Mammary epithelial cell (primary cell): ENCODE measurements at regions of chr3 and their contacts with region 1.

Region 1: DNA sequence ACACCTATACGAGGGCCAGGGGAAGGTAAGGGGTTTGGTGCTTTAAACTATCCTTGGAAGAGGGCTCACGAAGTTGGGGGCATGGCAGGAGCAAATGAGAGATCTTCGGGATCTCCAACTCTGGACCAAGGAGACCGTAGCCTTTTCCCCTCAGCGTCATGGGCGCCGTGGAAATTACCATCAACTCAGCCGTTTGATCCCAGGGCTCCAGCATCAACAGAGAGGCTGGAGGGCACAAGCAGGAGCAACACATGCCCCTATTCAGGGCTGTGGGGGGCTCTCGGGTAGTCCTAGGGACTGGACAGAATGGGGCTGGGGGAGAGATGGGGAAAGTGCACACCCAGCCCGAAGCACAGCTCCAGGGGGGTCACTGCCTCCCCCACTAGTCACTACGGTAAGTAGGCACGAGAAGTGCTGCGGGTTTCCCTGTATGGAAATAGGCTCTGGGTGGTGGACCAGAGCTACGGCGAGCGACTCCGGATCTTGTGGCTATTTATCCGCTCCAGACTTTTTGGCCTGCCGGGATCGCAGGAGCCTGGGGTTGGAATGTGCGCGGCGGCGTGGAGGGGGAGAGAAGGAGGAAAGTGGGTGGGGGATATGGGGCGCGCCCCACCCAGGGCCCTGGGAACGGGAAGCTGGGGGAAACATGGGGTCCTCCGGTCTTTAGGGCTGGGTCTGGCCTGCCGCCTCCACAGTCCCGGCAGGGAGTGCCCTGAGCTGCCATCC is 539 bp upstream of the LAMB2 start:
- DNase-seq: peak; percentile 84
- H3K4me3 ChIP-seq: peak overlapping the region; percentile 68 to 74 (median 74)
- H3K27ac ChIP-seq: no peak overlapping the region
- H3K4me1 ChIP-seq: peaks cover 15% of the 10 kb centered on the region
- H3K27me3 ChIP-seq: no peaks in the 10 kb centered on the region
- CTCF ChIP-seq: no peak

Region 2: GRCh38 chr3:49120438-49121131 is 12.8 kb before region 1 on chr3 and contains the start of gene USP19:
- CTCF ChIA-PET with region 1: no interaction called
- dilution Hi-C with region 1: no loop called
- in situ Hi-C with region 1: no loop called
- intact Hi-C with region 1: loop called (anchors 1 kb)
- DNase-seq: peak; percentile 90
- H3K4me3 ChIP-seq: peak within 1 kb of the TSS; percentile 58 to 96 (median 70)
- H3K27ac ChIP-seq: peak within 1 kb of the TSS; percentile 67
- H3K4me1 ChIP-seq: peaks cover 17% of the 10 kb centered on the region
- H3K27me3 ChIP-seq: no peaks in the 10 kb centered on the region
- CTCF ChIP-seq: no peak
- total RNA-seq, gene USP19: 30.5 to 37.2 TPM

Region 3: DNA sequence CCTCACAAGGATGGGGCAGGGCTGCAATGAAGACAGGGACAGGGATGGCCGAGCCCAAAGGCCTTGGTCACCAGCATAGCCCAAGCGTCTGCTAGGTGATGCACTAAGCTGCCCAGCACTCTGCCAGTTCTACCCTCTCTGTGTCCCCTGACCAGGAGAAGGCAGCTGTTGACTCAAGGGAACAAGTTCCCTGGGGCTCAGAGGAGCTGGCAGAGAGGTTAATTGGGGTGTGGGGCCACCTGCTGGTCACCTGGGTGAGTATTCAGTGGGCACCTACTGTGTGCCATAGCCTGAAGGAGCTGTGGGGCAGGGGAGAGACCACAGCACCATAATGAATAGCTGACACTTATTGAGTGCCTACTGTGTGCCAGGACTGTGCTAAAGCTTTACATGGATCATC is 1519.3 kb after region 1 on chr3:
- CTCF ChIA-PET with region 1: no interaction called
- dilution Hi-C with region 1: no loop called
- in situ Hi-C with region 1: no loop called
- intact Hi-C with region 1: no loop called
- DNase-seq: peak; percentile 36
- H3K4me3 ChIP-seq: no peak overlapping the region
- H3K27ac ChIP-seq: no peak overlapping the region
- H3K4me1 ChIP-seq: no peaks in the 10 kb centered on the region
- H3K27me3 ChIP-seq: no peaks in the 10 kb centered on the region
- CTCF ChIP-seq: peak; percentile 39 to 63